ENCODE measurements at regions of chr1 and their contacts with region 1.

Region 1: GRCh38 chr1:178310685-178311105 is 186.1 kb downstream of the CLEC20A start:
- DNase-seq: no peak
- H3K4me3 Mint-ChIP-seq: no peak overlapping the region
- H3K27ac Mint-ChIP-seq: no peak overlapping the region
- H3K4me1 Mint-ChIP-seq: no peaks in the 10 kb centered on the region
- H3K27me3 Mint-ChIP-seq: peaks cover 4% of the 10 kb centered on the region

Region 2: GRCh38 chr1:178501705-178502329 is 191.1 kb after region 1 on chr1:
- intact Hi-C with region 1: loop called (anchors 2 kb)
- DNase-seq: peak; percentile 31
- H3K4me3 Mint-ChIP-seq: no peak overlapping the region
- H3K27ac Mint-ChIP-seq: no peak overlapping the region
- H3K4me1 Mint-ChIP-seq: no peaks in the 10 kb centered on the region
- H3K27me3 Mint-ChIP-seq: no peaks in the 10 kb centered on the region

Region 3: DNA sequence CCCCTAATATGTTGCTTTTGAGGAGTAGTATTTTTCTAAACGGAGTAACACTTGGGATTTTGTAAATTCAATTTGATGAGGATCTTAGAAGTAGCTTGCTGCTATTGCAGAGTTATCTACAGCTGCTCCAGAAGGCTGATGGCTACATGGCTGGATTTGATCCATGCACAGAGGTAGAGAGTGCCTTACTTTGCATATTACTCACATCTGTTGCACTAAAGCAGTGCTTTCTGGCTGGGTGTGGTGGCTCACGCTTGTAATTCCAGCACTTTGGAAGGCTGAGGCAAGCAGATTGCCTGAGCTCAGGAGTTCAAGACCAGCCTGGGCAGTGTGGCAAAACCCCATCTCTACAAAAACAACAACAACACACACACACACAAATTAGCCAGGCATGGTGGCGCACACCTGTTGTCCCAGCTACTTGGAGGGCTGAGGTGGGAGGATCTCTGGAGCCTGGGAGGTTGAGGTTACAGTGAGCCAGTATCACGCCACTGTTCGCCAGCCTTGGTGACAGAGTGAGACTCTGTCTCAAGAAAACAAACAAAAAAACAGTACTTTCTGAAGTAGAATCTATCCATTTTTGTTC is 439.0 kb after region 1 on chr1:
- intact Hi-C with region 1: loop called (anchors 5 kb)
- DNase-seq: no peak
- H3K4me3 Mint-ChIP-seq: no peak overlapping the region
- H3K27ac Mint-ChIP-seq: no peak overlapping the region
- H3K4me1 Mint-ChIP-seq: no peaks in the 10 kb centered on the region
- H3K27me3 Mint-ChIP-seq: no peaks in the 10 kb centered on the region